Motor neuron (in vitro differentiated cells): ENCODE measurements at regions of chr9 and their contacts with region 1.

Region 1: GRCh38 chr9:34437006-34437925 is 21.1 kb downstream of the FAM219A start:
- ATAC-seq: peak in 7 of 8 experiments; percentile 38 to 83 (median 67)
- H3K4me3 ChIP-seq: no peak overlapping the region
- H3K27ac ChIP-seq: no peak overlapping the region
- H3K4me1 ChIP-seq: peaks cover 1 to 3% of the 10 kb centered on the region in 2 donors

Region 2: DNA sequence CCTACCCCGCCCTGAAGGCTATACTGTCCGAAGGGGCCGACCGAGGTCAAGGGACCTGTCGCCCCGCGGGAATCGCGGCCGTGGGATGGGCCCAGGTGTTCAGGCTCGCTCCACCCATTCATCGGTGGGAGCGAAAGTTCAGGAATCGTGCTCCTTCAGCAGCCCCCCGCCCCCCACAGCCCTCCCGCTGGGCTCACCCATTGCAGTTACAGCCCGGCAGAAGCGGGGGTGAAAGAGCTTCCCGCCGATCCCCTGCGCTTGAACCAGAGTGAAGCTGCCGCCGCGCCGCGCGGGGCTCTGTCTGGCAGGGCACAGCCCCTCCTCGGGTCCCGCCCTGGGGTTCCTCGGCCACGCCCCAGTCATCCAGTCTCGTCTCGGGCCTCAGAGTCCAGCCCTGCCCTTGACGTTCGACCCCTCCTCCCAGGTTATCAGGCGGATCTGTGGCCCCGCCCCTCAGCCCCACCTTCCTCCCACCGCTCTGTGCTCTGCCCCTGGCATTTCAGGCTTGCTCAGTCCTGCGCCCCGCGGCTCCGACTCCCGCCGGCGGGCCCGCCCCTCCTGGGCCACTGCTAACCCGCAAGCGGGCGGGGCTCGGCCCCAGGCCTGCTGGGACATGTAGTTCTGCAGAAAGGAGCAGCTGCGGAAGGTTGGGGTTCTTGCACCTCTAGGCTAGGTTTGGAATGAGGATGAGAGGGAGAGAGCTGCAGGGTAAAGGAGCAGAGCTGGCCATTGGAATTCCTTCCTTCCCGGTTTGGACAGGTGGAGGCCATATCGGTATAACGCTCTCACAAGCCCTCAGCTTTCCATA is 60.5 kb before region 1 on chr9 and contains the start of gene MYORG:
- in situ Hi-C with region 1: no loop called
- ATAC-seq: peak; percentile 73 to 87 (median 84)
- H3K4me3 ChIP-seq: peak within 1 kb of the TSS; percentile 36 to 50 (median 48)
- H3K27ac ChIP-seq: peak within 1 kb of the TSS in 1 of 2 donors; percentile 33
- H3K4me1 ChIP-seq: peaks cover 16 to 24% of the 10 kb centered on the region in 2 donors
- total RNA-seq, gene MYORG: 0.31 to 11.4 (median 2.4) TPM

Region 3: DNA sequence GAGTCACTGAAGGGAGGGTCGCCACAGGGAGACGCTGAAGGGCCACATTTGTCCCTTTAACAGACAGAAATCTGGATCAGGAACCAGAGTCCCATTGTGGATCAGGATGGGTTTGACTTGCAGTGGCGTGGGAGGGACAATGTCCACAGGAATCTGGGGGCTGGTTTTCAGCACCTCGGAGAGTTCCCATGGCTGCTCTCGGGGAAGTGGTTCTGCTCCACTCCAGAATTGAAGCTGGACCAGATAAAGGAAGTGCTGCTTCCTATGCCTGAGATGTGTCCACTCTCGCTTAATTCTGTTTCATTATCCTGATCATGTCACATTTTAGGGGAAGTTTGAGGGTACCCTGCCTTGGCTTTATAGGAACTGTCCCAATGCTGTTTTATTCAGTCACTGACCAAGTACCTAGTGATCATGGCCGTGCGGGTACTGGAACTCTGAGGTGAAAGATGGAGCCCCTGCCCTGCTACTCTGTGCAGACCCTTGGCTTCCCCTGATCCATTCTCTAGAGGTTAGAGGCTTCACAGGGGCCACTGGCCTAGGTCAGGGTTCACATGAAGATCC is 56.8 kb after region 1 on chr9:
- in situ Hi-C with region 1: loop called in 1 of 9 experiments (anchors 10 kb)
- ATAC-seq: peak in 4 of 8 experiments; percentile 29 to 80 (median 68)
- H3K4me3 ChIP-seq: no peak overlapping the region
- H3K27ac ChIP-seq: no peak overlapping the region
- H3K4me1 ChIP-seq: peaks cover 0 to 4% of the 10 kb centered on the region in 2 donors

Region 4: DNA sequence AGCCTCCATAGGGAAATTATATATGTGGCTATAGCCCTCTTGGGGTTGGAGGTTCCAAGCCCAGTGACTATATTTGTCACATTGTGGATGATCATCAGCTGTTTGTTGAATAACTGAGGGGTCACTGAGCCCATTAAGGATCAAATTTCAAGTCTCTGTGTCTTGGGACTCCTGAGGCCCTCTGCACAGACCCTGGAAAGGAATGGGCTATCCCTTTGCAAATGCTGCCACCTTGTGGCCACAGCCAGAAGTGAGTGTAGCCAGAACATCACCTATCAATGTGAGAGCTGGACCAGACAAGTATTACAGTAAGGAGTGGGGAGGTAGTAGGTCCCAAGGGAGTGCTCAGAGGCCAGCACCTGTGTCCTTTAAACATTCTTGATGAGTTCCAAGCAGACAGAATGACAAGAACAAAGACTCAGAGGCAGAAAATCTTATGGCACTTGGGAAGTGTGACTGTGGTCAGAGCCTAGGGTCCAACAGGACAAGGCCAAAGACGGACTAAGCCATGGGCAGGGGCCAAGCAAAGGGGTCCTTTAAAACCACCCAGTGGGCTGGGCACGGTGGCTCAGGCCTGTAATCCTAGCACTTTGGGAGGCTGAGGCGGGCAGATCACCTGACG is 166.5 kb after region 1 on chr9:
- in situ Hi-C with region 1: loop called in 1 of 9 experiments (anchors 10 kb)
- ATAC-seq: peak; percentile 61 to 91 (median 86)
- H3K4me3 ChIP-seq: no peak overlapping the region
- H3K27ac ChIP-seq: no peak overlapping the region
- H3K4me1 ChIP-seq: peaks cover 18 to 33% of the 10 kb centered on the region in 2 donors

Region 5: GRCh38 chr9:35029852-35030251 is 592.6 kb after region 1 on chr9:
- in situ Hi-C with region 1: no loop called
- ATAC-seq: peak in 1 of 8 experiments; percentile 23
- H3K4me3 ChIP-seq: no peak overlapping the region
- H3K27ac ChIP-seq: no peak overlapping the region
- H3K4me1 ChIP-seq: no peaks in the 10 kb centered on the region